ENCODE measurements at regions of chr5 and their contacts with region 1.

Region 1: GRCh38 chr5:135602882-135603721 is 24.3 kb upstream of the CXCL14 start:
- DNase-seq: no peak

Region 2: GRCh38 chr5:136723806-136724583 is 1120.9 kb after region 1 on chr5:
- intact Hi-C with region 1: loop called in 1 of 2 experiments (anchors 5 kb)
- DNase-seq: no peak